ENCODE measurements at regions of chr6 and their contacts with region 1.

Region 1: GRCh38 chr6:49531774-49532569 is 18.5 kb upstream of the C6orf141 start:
- DNase-seq: no peak
- ATAC-seq: peak; percentile 87
- H3K4me3 Mint-ChIP-seq: no peak overlapping the region
- H3K27ac Mint-ChIP-seq: no peak overlapping the region
- H3K4me1 Mint-ChIP-seq: no peaks in the 10 kb centered on the region
- H3K27me3 Mint-ChIP-seq: peaks cover 17% of the 10 kb centered on the region

Region 2: DNA sequence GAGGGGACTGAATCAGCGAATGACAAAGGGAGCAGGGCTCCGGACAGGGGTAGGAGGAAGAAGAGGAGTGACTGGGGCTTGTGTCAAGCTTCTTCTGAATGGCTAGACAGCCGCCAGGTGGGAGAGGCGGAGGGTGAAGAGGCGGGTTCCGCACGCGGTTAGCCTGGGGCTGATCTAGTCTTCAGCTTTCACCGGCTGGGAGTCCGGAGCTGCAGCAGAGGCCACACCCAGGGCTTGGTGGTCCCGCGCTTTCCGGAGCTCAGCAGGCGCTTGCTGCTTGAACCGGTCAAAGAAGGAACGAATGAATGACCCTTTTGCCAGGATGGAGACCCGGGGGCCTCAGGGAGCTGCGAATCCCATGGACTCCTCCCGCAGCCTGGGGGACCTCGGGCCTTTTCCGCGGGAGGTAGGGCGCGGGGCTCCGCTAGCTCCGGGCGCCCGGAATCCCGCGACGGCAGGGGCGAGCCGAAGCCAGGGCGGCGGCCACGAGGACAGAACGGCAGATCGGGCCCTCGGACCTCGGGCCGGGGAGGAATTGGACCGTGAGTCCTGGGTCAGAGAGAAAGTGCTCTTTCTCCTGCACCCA is 18.6 kb after region 1 on chr6 and contains the start of gene C6orf141:
- CTCF ChIA-PET with region 1: interaction called, 28 read pairs
- POLR2A ChIA-PET with region 1: no interaction called
- DNase-seq: peak; percentile 65
- ATAC-seq: peak; percentile 95
- H3K4me3 Mint-ChIP-seq: peak within 1 kb of the TSS; percentile 71
- H3K27ac Mint-ChIP-seq: no peak within 1 kb of the TSS
- H3K4me1 Mint-ChIP-seq: peaks cover 20% of the 10 kb centered on the region
- H3K27me3 Mint-ChIP-seq: peaks cover 30% of the 10 kb centered on the region
- total RNA-seq, gene C6orf141: 0.26 TPM in 1 of 2 experiments, not detected in the other

Region 3: GRCh38 chr6:49606696-49607390 is 74.9 kb after region 1 on chr6:
- CTCF ChIA-PET with region 1: interaction called, 13 read pairs
- POLR2A ChIA-PET with region 1: no interaction called
- DNase-seq: peak; percentile 33
- ATAC-seq: peak; percentile 44
- H3K4me3 Mint-ChIP-seq: no peak overlapping the region
- H3K27ac Mint-ChIP-seq: no peak overlapping the region
- H3K4me1 Mint-ChIP-seq: no peaks in the 10 kb centered on the region
- H3K27me3 Mint-ChIP-seq: peaks cover 4% of the 10 kb centered on the region

Region 4: DNA sequence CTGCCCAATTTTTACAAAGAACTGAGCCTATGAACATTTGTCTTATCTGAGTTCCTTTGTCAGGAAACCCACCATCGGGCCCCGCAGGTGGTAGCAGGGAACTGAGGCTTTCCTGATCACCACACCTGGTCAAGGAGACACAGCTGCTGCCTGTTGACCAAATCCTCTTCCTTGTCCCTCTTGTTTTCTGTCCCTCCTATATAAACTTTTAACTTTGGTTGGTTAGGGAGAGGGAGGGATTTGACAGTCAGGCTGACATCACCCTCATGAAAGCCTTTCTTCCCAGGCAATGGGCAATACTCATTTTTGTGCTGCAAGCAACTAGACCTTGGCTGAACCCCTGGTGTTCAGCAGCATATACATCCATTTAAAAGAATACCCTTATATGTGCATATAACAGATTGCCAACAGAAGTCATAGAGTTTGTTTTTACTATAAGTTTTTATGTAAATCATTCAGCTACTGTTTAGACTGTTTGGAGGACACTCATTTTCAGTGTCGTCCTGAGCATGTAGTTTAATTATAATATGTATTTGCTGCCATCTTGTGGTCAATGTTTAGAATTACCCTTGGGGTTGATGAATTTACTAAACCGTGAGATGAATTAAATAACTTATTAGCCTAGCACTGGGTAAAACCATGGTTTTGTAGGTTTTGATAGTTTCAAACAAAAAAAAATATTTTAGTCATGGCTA is 317.4 kb after region 1 on chr6:
- CTCF ChIA-PET with region 1: interaction called, 15 read pairs
- POLR2A ChIA-PET with region 1: no interaction called
- DNase-seq: no peak
- ATAC-seq: no peak
- H3K4me3 Mint-ChIP-seq: no peak overlapping the region
- H3K27ac Mint-ChIP-seq: no peak overlapping the region
- H3K4me1 Mint-ChIP-seq: no peaks in the 10 kb centered on the region
- H3K27me3 Mint-ChIP-seq: no peaks in the 10 kb centered on the region